ENCODE measurements at regions of chrX and their contacts with region 1.

Region 1: GRCh38 chrX:31012509-31013025 is 59.3 kb downstream of the FTHL17 start:
- DNase-seq: no peak
- H3K4me3 ChIP-seq: no peak overlapping the region
- H3K27ac ChIP-seq: no peak overlapping the region
- H3K4me1 ChIP-seq: no peaks in the 10 kb centered on the region
- H3K27me3 ChIP-seq: peaks cover 0 to 10% of the 10 kb centered on the region in 2 donors
- CTCF ChIP-seq: no peak
- POLR2A ChIP-seq: no peak

Region 2: DNA sequence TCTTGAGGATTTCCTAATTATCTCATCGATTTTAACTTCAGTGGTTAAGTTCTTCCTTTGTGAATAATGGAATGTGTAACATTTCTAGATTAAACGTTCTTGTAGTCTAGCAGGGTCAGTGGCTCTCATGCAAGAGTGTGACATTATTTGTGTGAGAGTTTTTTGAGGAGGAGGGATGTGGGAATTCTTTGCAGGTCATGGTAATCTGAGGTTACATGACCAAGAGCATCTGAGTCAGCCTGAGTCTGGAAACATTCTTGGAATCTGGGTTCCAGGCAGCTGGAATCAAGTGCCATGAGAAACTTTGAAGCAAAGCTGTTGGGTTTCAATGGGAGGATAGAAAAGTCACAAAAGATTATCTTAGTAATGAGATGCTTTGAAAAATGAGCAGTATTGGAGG is 309.8 kb before region 1 on chrX:
- intact Hi-C with region 1: no loop called
- DNase-seq: no peak
- H3K4me3 ChIP-seq: no peak overlapping the region
- H3K27ac ChIP-seq: no peak overlapping the region
- H3K4me1 ChIP-seq: no peaks in the 10 kb centered on the region
- H3K27me3 ChIP-seq: no peaks in the 10 kb centered on the region
- CTCF ChIP-seq: no peak
- POLR2A ChIP-seq: no peak

Region 3: GRCh38 chrX:30889147-30890140 is 123.1 kb before region 1 on chrX and contains the start of gene TAB3:
- intact Hi-C with region 1: loop called (anchors 5 kb)
- DNase-seq: peak; percentile 91 to 94
- H3K4me3 ChIP-seq: peak within 1 kb of the TSS; percentile 76 to 78 (median 77)
- H3K27ac ChIP-seq: peak within 1 kb of the TSS; percentile 85 to 92
- H3K4me1 ChIP-seq: peaks cover 0 to 3% of the 10 kb centered on the region in 2 donors
- H3K27me3 ChIP-seq: peaks cover 0 to 37% of the 10 kb centered on the region in 2 donors
- CTCF ChIP-seq: no peak
- POLR2A ChIP-seq: no peak
- total RNA-seq, gene TAB3: 20.6 to 40.5 (median 27.2) TPM

Measured in breast epithelium (tissue), 4 donors.